ENCODE measurements at regions of chr16 and their contacts with region 1.

Region 1: GRCh38 chr16:64952177-64952576 is 169.7 kb downstream of the CDH11 start:
- DNase-seq: no peak
- H3K4me3 ChIP-seq: no peak overlapping the region
- H3K27ac ChIP-seq: no peak overlapping the region
- H3K4me1 ChIP-seq: peaks cover 24% of the 10 kb centered on the region
- H3K27me3 ChIP-seq: no peaks in the 10 kb centered on the region
- CTCF ChIP-seq: no peak

Region 2: DNA sequence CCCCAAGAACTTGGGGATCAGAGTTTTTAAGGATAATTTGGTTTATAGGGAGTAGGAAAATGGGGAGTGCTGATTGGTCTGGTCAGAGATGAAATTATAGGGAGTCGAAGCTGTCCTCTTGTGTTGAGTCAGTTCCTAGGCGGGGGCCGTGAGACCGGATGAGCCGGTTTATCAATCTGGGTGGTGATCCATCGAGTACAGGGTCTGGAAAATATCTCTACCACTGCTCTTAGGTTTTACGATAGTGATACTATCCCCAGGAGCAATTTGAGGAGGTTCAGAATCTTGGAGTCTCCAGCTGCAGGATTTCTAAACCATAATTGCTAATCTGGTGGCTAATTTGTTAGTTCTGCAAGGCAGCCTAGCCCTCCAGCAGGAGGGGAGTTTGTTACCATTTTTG is 233.7 kb before region 1 on chr16:
- CTCF ChIA-PET with region 1: interaction called, 11 read pairs
- POLR2A ChIA-PET with region 1: no interaction called
- intact Hi-C with region 1: no loop called
- DNase-seq: no peak
- H3K4me3 ChIP-seq: no peak overlapping the region
- H3K27ac ChIP-seq: no peak overlapping the region
- H3K4me1 ChIP-seq: peaks cover 10% of the 10 kb centered on the region
- H3K27me3 ChIP-seq: no peaks in the 10 kb centered on the region
- CTCF ChIP-seq: no peak

Region 3: DNA sequence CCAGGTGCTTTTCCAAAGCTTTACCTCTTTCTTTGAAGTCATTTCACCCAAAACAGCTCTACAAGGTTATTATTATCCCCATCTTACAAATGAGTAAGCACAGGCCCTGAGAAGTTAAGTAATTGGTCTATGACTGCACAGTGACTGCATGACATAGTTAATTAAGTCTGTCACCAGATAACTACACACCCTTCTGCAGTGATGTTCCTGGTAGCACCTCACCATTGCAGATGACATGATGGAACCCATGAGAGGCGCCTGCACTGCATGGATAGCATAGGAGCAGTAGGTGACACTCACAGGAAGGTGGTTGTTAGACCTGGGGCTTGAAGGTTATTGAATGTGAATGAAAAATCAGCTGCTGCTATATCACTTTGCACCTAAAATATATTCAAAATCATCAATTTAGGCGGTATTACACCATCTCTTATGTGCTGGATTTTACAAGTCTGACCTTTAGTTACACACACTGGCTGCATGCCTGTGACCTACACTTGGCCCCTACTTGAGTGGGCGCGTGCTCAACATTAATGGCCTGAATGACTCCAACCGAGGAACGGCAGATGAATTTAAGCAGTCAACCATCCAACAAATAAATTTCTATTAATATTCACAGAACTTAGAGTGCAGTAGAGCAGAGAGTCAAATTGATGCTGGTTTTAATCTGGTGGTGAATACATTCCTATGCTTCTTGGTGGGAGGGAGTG is 69.9 kb before region 1 on chr16:
- CTCF ChIA-PET with region 1: no interaction called
- POLR2A ChIA-PET with region 1: interaction called, 10 read pairs
- intact Hi-C with region 1: no loop called
- DNase-seq: no peak
- H3K4me3 ChIP-seq: no peak overlapping the region
- H3K27ac ChIP-seq: no peak overlapping the region
- H3K4me1 ChIP-seq: no peaks in the 10 kb centered on the region
- H3K27me3 ChIP-seq: no peaks in the 10 kb centered on the region
- CTCF ChIP-seq: no peak

Region 4: GRCh38 chr16:65375651-65376050 is 423.5 kb after region 1 on chr16:
- CTCF ChIA-PET with region 1: no interaction called
- POLR2A ChIA-PET with region 1: no interaction called
- intact Hi-C with region 1: no loop called
- DNase-seq: no peak
- H3K4me3 ChIP-seq: no peak overlapping the region
- H3K27ac ChIP-seq: no peak overlapping the region
- H3K4me1 ChIP-seq: peaks cover 11% of the 10 kb centered on the region
- H3K27me3 ChIP-seq: no peaks in the 10 kb centered on the region
- CTCF ChIP-seq: no peak

Measured in A673 (cell line).